ENCODE measurements at regions of chr17 and their contacts with region 1.

Region 1: DNA sequence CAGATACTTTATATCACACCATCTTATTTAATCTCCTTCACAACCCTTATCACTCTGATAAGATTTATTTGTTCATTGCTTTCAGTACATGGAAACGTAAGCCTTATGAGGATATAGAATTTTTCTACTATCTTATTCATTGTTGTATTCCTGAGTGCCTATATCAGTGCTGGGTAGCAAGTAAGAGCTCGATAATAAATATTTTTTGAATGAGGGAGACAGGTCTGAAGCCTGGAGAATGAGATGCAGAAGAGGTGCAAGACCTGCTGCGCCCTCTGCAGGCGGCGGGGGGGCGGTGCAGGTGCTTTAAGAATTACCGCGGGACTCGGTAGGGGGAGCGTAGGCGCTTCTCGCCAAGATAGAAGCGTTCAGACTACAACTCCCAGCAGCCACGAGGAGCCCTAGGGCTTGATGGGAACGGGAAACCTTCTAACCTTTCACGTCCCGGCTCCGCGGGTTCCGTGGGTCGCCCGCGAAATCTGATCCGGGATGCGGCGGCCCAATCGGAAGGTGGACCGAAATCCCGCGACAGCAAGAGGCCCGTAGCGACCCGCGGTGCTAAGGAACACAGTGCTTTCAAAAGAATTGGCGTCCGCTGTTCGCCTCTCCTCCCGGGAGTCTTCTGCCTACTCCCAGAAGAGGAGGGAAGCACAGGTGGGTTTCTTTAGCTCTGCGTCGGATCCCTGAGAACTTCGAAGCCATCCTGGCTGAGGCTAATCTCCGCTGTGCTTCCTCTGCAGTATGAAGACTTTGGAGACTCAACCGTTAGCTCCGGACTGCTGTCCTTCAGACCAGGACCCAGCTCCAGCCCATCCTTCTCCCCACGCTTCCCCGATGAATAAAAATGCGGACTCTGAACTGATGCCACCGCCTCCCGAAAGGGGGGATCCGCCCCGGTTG is at the start of gene WRAP53:
- DNase-seq: peak; percentile 80 to 97 (median 86)
- ATAC-seq: peak; percentile 89
- H3K4me3 ChIP-seq: peak within 1 kb of the TSS; percentile 78
- H3K27ac ChIP-seq: peak within 1 kb of the TSS; percentile 99
- H3K4me1 ChIP-seq: peaks cover 6 to 21% of the 10 kb centered on the region in 2 experiments; a peak in 3 of 5 replicates
- H3K27me3 ChIP-seq: no peaks in the 10 kb centered on the region
- CTCF ChIP-seq: peak; percentile 96 to 99 (median 99)
- EP300 ChIP-seq: no peak
- POLR2A ChIP-seq: peak; percentile 76
- RAD21 ChIP-seq: peak; percentile 75 to 84
- polyA plus RNA-seq, gene WRAP53: 0.72 to 4.1 TPM

Region 2: GRCh38 chr17:7583253-7584109 is 104.7 kb before region 1 on chr17 and contains the start of gene MPDU1:
- CTCF ChIA-PET with region 1: interaction called, 3 read pairs
- POLR2A ChIA-PET with region 1: interaction called, 35 read pairs
- in situ Hi-C with region 1: no loop called
- intact Hi-C with region 1: loop called (anchors 5 kb)
- DNase-seq: peak; percentile 70 to 96 (median 78)
- ATAC-seq: peak; percentile 55
- H3K4me3 ChIP-seq: peak within 1 kb of the TSS; percentile 47
- H3K27ac ChIP-seq: peak within 1 kb of the TSS; percentile 99
- H3K4me1 ChIP-seq: peaks cover 65 to 80% of the 10 kb centered on the region in 2 experiments
- H3K27me3 ChIP-seq: no peaks in the 10 kb centered on the region
- CTCF ChIP-seq: no peak
- EP300 ChIP-seq: peak; percentile 55; the same call in 1 of the 2 replicates
- POLR2A ChIP-seq: peak; percentile 93
- RAD21 ChIP-seq: no peak
- polyA plus RNA-seq, gene MPDU1: 4.9 to 21.8 TPM

Region 3: DNA sequence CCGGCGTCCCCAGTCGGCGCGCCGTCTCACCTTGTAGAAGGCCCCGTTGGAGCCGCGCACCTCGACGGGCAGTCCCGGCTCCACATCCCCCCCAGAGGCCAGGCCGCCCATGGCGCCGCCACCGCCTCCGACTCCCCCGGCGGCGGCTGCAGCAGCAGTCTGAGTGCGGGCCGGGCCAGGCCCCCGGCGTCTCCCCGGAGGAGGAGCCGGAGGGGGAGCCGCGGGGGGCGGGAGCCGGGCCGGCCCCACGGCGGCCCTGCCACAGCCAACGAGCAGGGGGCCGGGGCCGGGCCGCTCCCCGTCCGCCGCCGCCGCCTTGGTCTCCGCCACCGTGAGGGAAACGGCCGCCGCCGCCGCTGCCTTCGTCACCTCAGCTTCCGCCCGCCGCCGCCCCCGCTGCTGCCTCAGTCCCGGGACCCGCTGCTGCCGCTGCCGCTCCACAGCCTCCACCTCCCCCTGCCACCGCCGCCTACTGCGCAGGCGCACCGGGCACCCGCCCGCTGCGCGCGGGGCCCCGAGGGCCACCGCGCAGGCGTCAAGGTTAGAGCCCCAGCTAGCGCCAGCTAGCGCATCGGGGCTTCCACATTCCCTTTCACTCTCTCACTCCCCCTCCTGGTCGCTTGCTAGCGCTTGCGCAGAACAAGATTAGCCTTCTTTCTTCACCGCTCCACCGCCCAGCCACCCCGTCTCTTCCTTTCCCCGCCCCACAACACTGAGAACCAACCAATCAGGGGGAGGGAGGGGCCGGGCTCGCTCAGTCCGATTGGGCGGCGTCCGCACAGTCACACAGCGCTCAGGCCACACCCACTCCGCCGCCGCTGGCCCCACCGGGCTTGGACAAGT is 73.5 kb before region 1 on chr17 and contains the start of gene FXR2:
- CTCF ChIA-PET with region 1: no interaction called
- POLR2A ChIA-PET with region 1: interaction called, 28 read pairs
- in situ Hi-C with region 1: no loop called
- intact Hi-C with region 1: no loop called
- DNase-seq: peak; percentile 95 to 99 (median 96)
- ATAC-seq: peak; percentile 98
- H3K4me3 ChIP-seq: peak within 1 kb of the TSS; percentile 81
- H3K27ac ChIP-seq: peak within 1 kb of the TSS; percentile 80
- H3K4me1 ChIP-seq: peaks cover 16 to 27% of the 10 kb centered on the region in 2 experiments; a peak in 4 of 5 replicates
- H3K27me3 ChIP-seq: no peaks in the 10 kb centered on the region
- CTCF ChIP-seq: peak; percentile 75 to 98 (median 98)
- EP300 ChIP-seq: no peak
- POLR2A ChIP-seq: no peak
- RAD21 ChIP-seq: peak; percentile 28 to 33; a peak in 3 of 4 replicates
- polyA plus RNA-seq, gene FXR2: 2.0 to 2.2 TPM

Region 4: DNA sequence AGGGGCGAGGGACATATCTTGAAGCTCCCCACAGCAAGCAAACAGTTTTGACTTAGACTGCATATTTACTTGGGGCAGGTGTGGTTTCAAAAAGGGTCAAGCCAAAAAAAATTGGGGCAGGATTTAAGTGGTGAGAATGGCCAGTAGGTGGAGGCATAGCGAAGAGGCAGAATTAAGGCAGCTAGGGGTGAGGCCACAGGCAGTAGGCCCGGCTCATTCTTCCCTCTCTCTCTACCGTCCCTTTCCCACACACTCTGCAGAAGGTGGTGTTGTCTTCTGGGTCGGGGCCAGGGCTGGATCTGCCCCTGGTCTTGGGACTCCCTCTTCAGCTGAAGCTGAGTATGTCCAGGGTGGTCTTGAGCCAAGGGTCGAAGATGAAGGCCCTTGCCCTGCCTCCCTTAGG is 55.7 kb before region 1 on chr17:
- CTCF ChIA-PET with region 1: interaction called, 18 read pairs
- POLR2A ChIA-PET with region 1: interaction called, 38 read pairs
- in situ Hi-C with region 1: loop called (anchors 5 kb)
- intact Hi-C with region 1: loop called (anchors 1 kb)
- DNase-seq: peak; percentile 48 to 68 (median 55)
- ATAC-seq: peak; percentile 84
- H3K4me3 ChIP-seq: no peak overlapping the region
- H3K27ac ChIP-seq: no peak overlapping the region
- H3K4me1 ChIP-seq: peaks cover 0 to 13% of the 10 kb centered on the region in 2 experiments; a peak in 3 of 5 replicates
- H3K27me3 ChIP-seq: no peaks in the 10 kb centered on the region
- CTCF ChIP-seq: peak; percentile 65 to 76 (median 71)
- EP300 ChIP-seq: no peak
- POLR2A ChIP-seq: no peak
- RAD21 ChIP-seq: peak; percentile 35 to 62; a peak in 3 of 4 replicates

Region 5: DNA sequence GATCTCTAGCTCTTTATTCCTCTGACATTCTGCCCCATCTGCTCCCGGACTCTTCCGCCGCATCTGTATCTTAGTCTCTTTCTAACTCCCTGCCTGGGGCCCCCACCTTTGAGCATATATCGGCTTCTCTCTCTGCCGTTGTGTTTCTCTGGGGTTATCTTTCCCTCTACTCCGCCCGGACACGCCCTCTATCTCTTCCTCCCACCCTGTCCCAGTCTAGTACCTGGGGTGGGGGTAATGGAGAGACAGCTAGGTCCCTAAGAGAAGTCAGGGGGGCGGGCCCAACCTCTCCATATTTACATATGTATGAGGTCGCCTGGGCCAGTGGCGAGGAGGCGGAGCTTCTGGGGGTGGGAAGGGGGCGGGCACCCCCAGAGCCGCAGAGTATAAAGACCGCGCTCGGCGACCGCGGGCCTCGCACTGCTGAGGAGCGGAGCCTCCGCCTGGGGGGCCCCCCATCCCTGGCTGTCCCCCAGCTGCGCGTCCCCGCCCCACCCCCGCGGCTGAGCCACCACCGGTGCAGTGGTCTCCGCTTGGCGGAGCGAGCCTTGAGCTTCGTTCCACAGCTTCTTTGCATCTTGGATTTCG is 37.6 kb before region 1 on chr17 and contains the start of gene ATP1B2:
- CTCF ChIA-PET with region 1: no interaction called
- POLR2A ChIA-PET with region 1: interaction called, 41 read pairs
- in situ Hi-C with region 1: no loop called
- intact Hi-C with region 1: no loop called
- DNase-seq: peak; percentile 93 to 97 (median 96)
- ATAC-seq: peak; percentile 96
- H3K4me3 ChIP-seq: peak within 1 kb of the TSS; percentile 39
- H3K27ac ChIP-seq: peak within 1 kb of the TSS; percentile 67
- H3K4me1 ChIP-seq: peaks cover 18 to 47% of the 10 kb centered on the region in 2 experiments; a peak in 4 of 5 replicates
- H3K27me3 ChIP-seq: no peaks in the 10 kb centered on the region
- CTCF ChIP-seq: no peak
- EP300 ChIP-seq: no peak
- POLR2A ChIP-seq: peak; percentile 68
- RAD21 ChIP-seq: no peak
- polyA plus RNA-seq, gene ATP1B2: 0.99 to 2.4 TPM

Region 6: DNA sequence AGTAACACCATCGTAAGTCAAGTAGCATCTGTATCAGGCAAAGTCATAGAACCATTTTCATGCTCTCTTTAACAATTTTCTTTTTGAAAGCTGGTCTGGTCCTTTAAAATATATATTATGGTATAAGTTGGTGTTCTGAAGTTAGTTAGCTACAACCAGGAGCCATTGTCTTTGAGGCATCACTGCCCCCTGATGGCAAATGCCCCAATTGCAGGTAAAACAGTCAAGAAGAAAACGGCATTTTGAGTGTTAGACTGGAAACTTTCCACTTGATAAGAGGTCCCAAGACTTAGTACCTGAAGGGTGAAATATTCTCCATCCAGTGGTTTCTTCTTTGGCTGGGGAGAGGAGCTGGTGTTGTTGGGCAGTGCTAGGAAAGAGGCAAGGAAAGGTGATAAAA is 14.9 kb before region 1 on chr17:
- CTCF ChIA-PET with region 1: no interaction called
- POLR2A ChIA-PET with region 1: interaction called, 66 read pairs
- in situ Hi-C with region 1: no loop called
- intact Hi-C with region 1: no loop called
- DNase-seq: peak in 3 of 4 experiments; percentile 29 to 47 (median 36)
- ATAC-seq: no peak
- H3K4me3 ChIP-seq: no peak overlapping the region
- H3K27ac ChIP-seq: no peak overlapping the region
- H3K4me1 ChIP-seq: no peaks in the 10 kb centered on the region
- H3K27me3 ChIP-seq: no peaks in the 10 kb centered on the region
- CTCF ChIP-seq: peak; percentile 53 to 59 (median 57)
- EP300 ChIP-seq: no peak
- POLR2A ChIP-seq: no peak
- RAD21 ChIP-seq: peak; percentile 13 to 48; a peak in 2 of 4 replicates

Region 7: GRCh38 chr17:7716901-7717755 is 29.0 kb after region 1 on chr17 and contains the start of gene DNAH2:
- CTCF ChIA-PET with region 1: no interaction called
- POLR2A ChIA-PET with region 1: interaction called, 12 read pairs
- in situ Hi-C with region 1: no loop called
- intact Hi-C with region 1: loop called (anchors 2 kb)
- DNase-seq: peak; percentile 73 to 93 (median 87)
- ATAC-seq: peak; percentile 93
- H3K4me3 ChIP-seq: peak within 1 kb of the TSS; percentile 45
- H3K27ac ChIP-seq: no peak within 1 kb of the TSS
- H3K4me1 ChIP-seq: peaks cover 6 to 21% of the 10 kb centered on the region in 2 experiments; a peak in 3 of 5 replicates
- H3K27me3 ChIP-seq: peaks cover 15 to 65% of the 10 kb centered on the region in 2 experiments; a peak in 4 of 5 replicates
- CTCF ChIP-seq: peak; percentile 46 to 75 (median 68); a peak in 5 of 6 replicates
- EP300 ChIP-seq: no peak
- POLR2A ChIP-seq: no peak
- RAD21 ChIP-seq: peak; percentile 53 to 73
- polyA plus RNA-seq, gene DNAH2: 0.03 TPM in 1 of 2 experiments, not detected in the other

Measured in K562 (cell line).